PC-9 (cell line): ENCODE measurements at regions of chr1 and their contacts with region 1.

Region 1: GRCh38 chr1:162726555-162726954 is 63.9 kb upstream of the HSD17B7 start:
- DNase-seq: no peak
- H3K4me3 ChIP-seq: no peak overlapping the region
- H3K27ac ChIP-seq: no peak overlapping the region
- H3K4me1 ChIP-seq: no peaks in the 10 kb centered on the region
- H3K27me3 ChIP-seq: no peaks in the 10 kb centered on the region
- CTCF ChIP-seq: no peak

Region 2: GRCh38 chr1:162633081-162633762 is 93.3 kb before region 1 on chr1:
- CTCF ChIA-PET with region 1: no interaction called
- POLR2A ChIA-PET with region 1: no interaction called
- intact Hi-C with region 1: loop called (anchors 10 kb)
- DNase-seq: no peak
- H3K4me3 ChIP-seq: no peak overlapping the region
- H3K27ac ChIP-seq: no peak overlapping the region
- H3K4me1 ChIP-seq: no peaks in the 10 kb centered on the region
- H3K27me3 ChIP-seq: no peaks in the 10 kb centered on the region
- CTCF ChIP-seq: no peak